ENCODE measurements at regions of chr14 and their contacts with region 1.

Region 1: GRCh38 chr14:83085136-83085535 is 1551.5 kb upstream of the SEL1L start:
- DNase-seq: no peak
- H3K4me3 ChIP-seq: no peak overlapping the region
- H3K27ac ChIP-seq: no peak overlapping the region
- H3K4me1 ChIP-seq: no peaks in the 10 kb centered on the region
- H3K27me3 ChIP-seq: no peaks in the 10 kb centered on the region
- CTCF ChIP-seq: no peak

Region 2: GRCh38 chr14:81519200-81520011 is 1565.7 kb before region 1 on chr14:
- CTCF ChIA-PET with region 1: no interaction called
- dilution Hi-C with region 1: no loop called
- in situ Hi-C with region 1: no loop called
- intact Hi-C with region 1: no loop called
- DNase-seq: no peak
- H3K4me3 ChIP-seq: no peak overlapping the region
- H3K27ac ChIP-seq: no peak overlapping the region
- H3K4me1 ChIP-seq: no peaks in the 10 kb centered on the region
- H3K27me3 ChIP-seq: no peaks in the 10 kb centered on the region
- CTCF ChIP-seq: no peak

Region 3: GRCh38 chr14:82861313-82861712 is 223.8 kb before region 1 on chr14:
- CTCF ChIA-PET with region 1: no interaction called
- dilution Hi-C with region 1: no loop called
- in situ Hi-C with region 1: no loop called
- intact Hi-C with region 1: no loop called
- DNase-seq: no peak
- H3K4me3 ChIP-seq: no peak overlapping the region
- H3K27ac ChIP-seq: no peak overlapping the region
- H3K4me1 ChIP-seq: no peaks in the 10 kb centered on the region
- H3K27me3 ChIP-seq: no peaks in the 10 kb centered on the region
- CTCF ChIP-seq: no peak

Region 4: GRCh38 chr14:83071888-83072501 is 13.1 kb before region 1 on chr14:
- CTCF ChIA-PET with region 1: interaction called, 10 read pairs
- dilution Hi-C with region 1: no loop called
- in situ Hi-C with region 1: no loop called
- intact Hi-C with region 1: no loop called
- DNase-seq: peak; percentile 8
- H3K4me3 ChIP-seq: no peak overlapping the region
- H3K27ac ChIP-seq: no peak overlapping the region
- H3K4me1 ChIP-seq: no peaks in the 10 kb centered on the region
- H3K27me3 ChIP-seq: no peaks in the 10 kb centered on the region
- CTCF ChIP-seq: peak; percentile 8 to 42

Measured in mammary epithelial cell (primary cell).